Mammary epithelial cell (primary cell): ENCODE measurements at regions of chr15 and their contacts with region 1.

Region 1: GRCh38 chr15:90387537-90388461 is at the start of gene IQGAP1:
- DNase-seq: peak; percentile 94
- H3K4me3 ChIP-seq: peak within 1 kb of the TSS; percentile 56 to 100 (median 99)
- H3K27ac ChIP-seq: peak within 1 kb of the TSS; percentile 89
- H3K4me1 ChIP-seq: peaks cover 16% of the 10 kb centered on the region
- H3K27me3 ChIP-seq: no peaks in the 10 kb centered on the region
- CTCF ChIP-seq: no peak
- total RNA-seq, gene IQGAP1: 247 to 272 TPM

Region 2: DNA sequence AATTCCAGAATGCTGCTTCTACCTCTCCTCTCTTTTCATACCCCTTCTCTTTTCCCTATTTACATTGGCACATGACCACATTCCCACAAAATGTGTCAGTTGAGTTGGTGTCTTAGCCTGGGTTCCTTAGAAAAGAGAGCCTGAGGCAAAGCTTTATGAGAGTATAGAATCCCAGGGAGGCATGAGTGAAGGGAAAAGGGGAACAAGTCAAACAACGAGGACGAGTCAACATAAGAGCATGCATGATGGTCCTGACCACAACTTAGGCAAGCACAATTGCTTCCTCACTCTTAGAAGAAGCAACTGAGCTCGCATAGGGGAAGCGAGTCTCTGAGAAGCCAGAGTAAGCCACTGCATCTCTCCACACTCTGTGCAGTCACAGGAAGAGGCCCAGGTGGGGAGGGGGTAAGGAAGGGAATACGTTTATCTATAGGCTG is 51.1 kb before region 1 on chr15:
- CTCF ChIA-PET with region 1: no interaction called
- dilution Hi-C with region 1: no loop called
- in situ Hi-C with region 1: no loop called
- intact Hi-C with region 1: loop called (anchors 2 kb)
- DNase-seq: peak; percentile 90
- H3K4me3 ChIP-seq: no peak overlapping the region
- H3K27ac ChIP-seq: peak overlapping the region; percentile 70
- H3K4me1 ChIP-seq: peaks cover 28% of the 10 kb centered on the region
- H3K27me3 ChIP-seq: no peaks in the 10 kb centered on the region
- CTCF ChIP-seq: no peak

Region 3: GRCh38 chr15:90362936-90363212 is 24.9 kb before region 1 on chr15:
- CTCF ChIA-PET with region 1: interaction called, 11 read pairs
- dilution Hi-C with region 1: no loop called
- in situ Hi-C with region 1: no loop called
- intact Hi-C with region 1: loop called (anchors 1 kb)
- DNase-seq: peak; percentile 66
- H3K4me3 ChIP-seq: no peak overlapping the region
- H3K27ac ChIP-seq: peak overlapping the region; percentile 90
- H3K4me1 ChIP-seq: peaks cover 44% of the 10 kb centered on the region
- H3K27me3 ChIP-seq: no peaks in the 10 kb centered on the region
- CTCF ChIP-seq: no peak

Region 4: GRCh38 chr15:90412356-90413194 is 24.8 kb after region 1 on chr15:
- CTCF ChIA-PET with region 1: no interaction called
- dilution Hi-C with region 1: no loop called
- in situ Hi-C with region 1: no loop called
- intact Hi-C with region 1: loop called (anchors 2 kb)
- DNase-seq: peak; percentile 97
- H3K4me3 ChIP-seq: peak overlapping the region in 1 of 3 experiments; percentile 29
- H3K27ac ChIP-seq: peak overlapping the region; percentile 79
- H3K4me1 ChIP-seq: peaks cover 51% of the 10 kb centered on the region
- H3K27me3 ChIP-seq: no peaks in the 10 kb centered on the region
- CTCF ChIP-seq: no peak

Region 5: DNA sequence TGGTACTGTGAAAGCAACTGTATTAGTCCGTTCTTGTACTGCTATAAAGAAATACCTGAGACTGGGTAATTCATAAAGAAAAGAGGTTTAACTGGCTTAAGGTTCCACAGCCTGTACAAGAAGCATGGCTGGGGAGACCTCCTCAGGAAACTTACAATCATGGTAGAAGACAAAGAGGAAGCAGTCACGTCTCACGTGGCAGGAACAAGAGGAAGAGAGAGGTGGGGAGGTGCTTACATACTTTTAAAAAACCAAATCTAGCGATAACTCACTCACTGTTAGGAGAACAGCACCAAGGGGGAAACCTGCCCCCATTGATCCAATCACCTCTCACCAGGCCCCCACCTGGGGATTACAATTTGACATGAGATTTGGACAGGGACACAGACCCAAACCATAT is 49.2 kb after region 1 on chr15:
- CTCF ChIA-PET with region 1: no interaction called
- dilution Hi-C with region 1: no loop called
- in situ Hi-C with region 1: no loop called
- intact Hi-C with region 1: loop called (anchors 5 kb)
- DNase-seq: no peak
- H3K4me3 ChIP-seq: no peak overlapping the region
- H3K27ac ChIP-seq: no peak overlapping the region
- H3K4me1 ChIP-seq: peaks cover 11% of the 10 kb centered on the region
- H3K27me3 ChIP-seq: no peaks in the 10 kb centered on the region
- CTCF ChIP-seq: no peak